Cardiac septum (tissue), 1 donor: ENCODE measurements at regions of chr5 and their contacts with region 1.

Region 1: GRCh38 chr5:132490486-132491367 is at the start of gene IRF1:
- DNase-seq: peak; percentile 99
- total RNA-seq, gene IRF1: 19.9 TPM

Region 2: GRCh38 chr5:132419502-132420468 is 70.9 kb before region 1 on chr5:
- intact Hi-C with region 1: loop called (anchors 2 kb)
- DNase-seq: peak; percentile 90